ENCODE measurements at regions of chr10 and their contacts with region 1.

Region 1: GRCh38 chr10:95561182-95562075 is at the start of gene SORBS1:
- DNase-seq: peak; percentile 98
- H3K4me3 ChIP-seq: peak within 1 kb of the TSS; percentile 89
- H3K4me3 Mint-ChIP-seq: peak within 1 kb of the TSS; percentile 99
- H3K27ac Mint-ChIP-seq: peak within 1 kb of the TSS; percentile 83
- H3K4me1 ChIP-seq: peaks cover 50% of the 10 kb centered on the region
- H3K4me1 Mint-ChIP-seq: peaks cover 59% of the 10 kb centered on the region
- H3K27me3 ChIP-seq: no peaks in the 10 kb centered on the region
- H3K27me3 Mint-ChIP-seq: no peaks in the 10 kb centered on the region
- CTCF ChIP-seq: no peak
- total RNA-seq, gene SORBS1: 39.3 and 44.1 TPM in 2 replicates

Region 2: GRCh38 chr10:95539560-95540284 is 21.7 kb before region 1 on chr10:
- CTCF ChIA-PET with region 1: interaction called, 3 read pairs
- POLR2A ChIA-PET with region 1: no interaction called
- intact Hi-C with region 1: loop called (anchors 1 kb)
- DNase-seq: peak in 1 of 2 experiments; percentile 55
- H3K4me3 ChIP-seq: no peak overlapping the region
- H3K4me3 Mint-ChIP-seq: peak overlapping the region; percentile 6
- H3K27ac Mint-ChIP-seq: peak overlapping the region; percentile 80
- H3K4me1 ChIP-seq: peaks cover 100% of the 10 kb centered on the region
- H3K4me1 Mint-ChIP-seq: peaks cover 77% of the 10 kb centered on the region
- H3K27me3 ChIP-seq: no peaks in the 10 kb centered on the region
- H3K27me3 Mint-ChIP-seq: no peaks in the 10 kb centered on the region
- CTCF ChIP-seq: no peak